Common myeloid progenitor, CD34-positive (primary cell): ENCODE measurements at regions of chr4 and their contacts with region 1.

Region 1: GRCh38 chr4:56821381-56822243 is at the start of gene SPINK2:
- DNase-seq: peak; percentile 68 to 78 (median 68)
- H3K4me3 ChIP-seq: peak within 1 kb of the TSS; percentile 69 to 95 (median 90)
- H3K27ac ChIP-seq: peak within 1 kb of the TSS in 1 of 2 experiments; percentile 73
- H3K4me1 ChIP-seq: peaks cover 0 to 46% (median 25%) of the 10 kb centered on the region in 4 experiments
- H3K27me3 ChIP-seq: no peaks in the 10 kb centered on the region

Region 2: DNA sequence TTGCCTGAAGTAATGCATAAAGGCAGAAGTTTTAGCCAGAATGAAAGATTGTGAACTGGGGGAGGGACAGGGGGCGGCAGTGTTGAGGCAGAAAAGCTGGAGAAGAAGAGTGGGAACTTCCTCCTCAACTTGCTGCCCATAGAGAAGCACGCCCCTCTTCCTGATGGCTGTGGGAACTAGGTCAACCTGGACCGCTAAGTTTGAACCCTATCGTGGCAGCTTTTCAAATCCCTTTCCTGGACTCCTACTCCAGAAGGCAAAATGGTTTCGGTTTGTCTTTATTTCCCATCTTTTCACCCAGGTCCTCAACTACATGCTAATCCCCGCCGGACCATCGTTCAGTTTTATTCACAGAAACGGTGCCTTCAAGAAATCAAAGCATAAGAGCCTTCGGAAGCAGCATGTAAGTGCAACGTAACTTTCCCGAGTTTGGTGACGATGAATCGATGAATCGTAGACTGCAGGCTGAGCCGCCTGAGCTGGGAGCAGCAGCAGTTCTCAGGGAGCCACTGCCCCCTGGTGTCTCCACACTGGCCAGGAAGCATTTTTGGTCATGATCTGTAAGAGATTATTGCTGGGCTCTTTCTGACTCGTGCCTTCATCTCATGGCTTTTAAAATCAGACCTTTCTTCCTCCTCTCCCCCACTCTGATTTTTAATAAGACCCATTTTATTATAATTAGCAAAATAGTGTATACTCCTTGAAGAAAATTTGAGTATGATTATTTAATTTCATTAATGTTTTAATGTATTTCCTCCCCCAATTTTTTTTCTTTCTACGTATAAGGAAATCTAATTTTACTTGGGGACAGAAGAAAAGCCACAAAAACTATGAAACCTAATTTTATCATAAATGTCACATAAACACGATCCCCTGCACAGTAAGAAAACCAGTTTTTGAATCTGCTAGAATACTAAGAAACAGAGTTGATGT is 21.5 kb before region 1 on chr4:
- CTCF ChIA-PET with region 1: interaction called, 15 read pairs
- POLR2A ChIA-PET with region 1: interaction called, 5 read pairs
- DNase-seq: peak; percentile 90 to 95 (median 94)
- H3K4me3 ChIP-seq: peak overlapping the region; percentile 53 to 96 (median 89)
- H3K27ac ChIP-seq: peak overlapping the region; percentile 62 to 84
- H3K4me1 ChIP-seq: peaks cover 9 to 54% (median 44%) of the 10 kb centered on the region in 4 experiments
- H3K27me3 ChIP-seq: no peaks in the 10 kb centered on the region